OCI-LY7 (cell line): ENCODE measurements at regions of chr2 and their contacts with region 1.

Region 1: GRCh38 chr2:63023444-63023843 is 27.2 kb upstream of the OTX1 start:
- DNase-seq: peak; percentile 33
- H3K4me3 ChIP-seq: no peak overlapping the region
- H3K27ac ChIP-seq: no peak overlapping the region
- H3K4me1 ChIP-seq: no peaks in the 10 kb centered on the region
- CTCF ChIP-seq: peak; percentile 69

Region 2: GRCh38 chr2:63012541-63012940 is 10.9 kb before region 1 on chr2:
- CTCF ChIA-PET with region 1: no interaction called
- POLR2A ChIA-PET with region 1: interaction called, 10 read pairs
- intact Hi-C with region 1: no loop called
- DNase-seq: no peak
- H3K4me3 ChIP-seq: no peak overlapping the region
- H3K27ac ChIP-seq: no peak overlapping the region
- H3K4me1 ChIP-seq: no peaks in the 10 kb centered on the region
- CTCF ChIP-seq: no peak